Pancreas (tissue), 10 donors: ENCODE measurements at regions of chr10 and their contacts with region 1.

Region 1: DNA sequence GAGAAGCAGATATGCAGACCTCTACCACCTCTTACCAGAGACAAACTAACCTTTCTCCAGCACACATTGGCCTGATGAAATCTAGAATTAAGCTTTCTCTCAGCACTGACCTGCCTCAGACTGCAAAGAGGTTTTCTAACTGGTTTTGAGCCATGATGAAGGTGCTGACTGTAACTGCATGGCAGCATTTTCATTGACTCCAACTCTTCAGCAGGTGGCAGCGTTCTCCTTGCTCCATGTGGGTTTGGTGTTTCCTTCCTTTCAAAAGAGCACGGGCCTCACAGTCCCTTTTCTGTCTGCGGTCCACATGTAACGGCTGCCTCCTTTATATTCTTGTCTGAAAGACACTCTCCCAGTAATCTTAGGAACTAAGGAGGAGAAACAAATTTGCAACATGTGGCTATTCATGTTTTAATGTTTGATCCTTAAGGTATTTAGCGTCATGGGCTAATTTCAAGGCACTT is 12.6 kb downstream of the KLLN start:
- DNase-seq: peak in 5 of 6 donors; percentile 36 to 75 (median 57)
- ATAC-seq: peak; percentile 95 to 100 (median 100)
- H3K4me3 ChIP-seq: no peak overlapping the region
- H3K27ac ChIP-seq: peak overlapping the region in 1 of 4 donors; percentile 24
- H3K4me1 ChIP-seq: peaks cover 0 to 3% (median 0%) of the 10 kb centered on the region in 3 donors
- H3K27me3 ChIP-seq: no peaks in the 10 kb centered on the region
- CTCF ChIP-seq: peak; percentile 26 to 52 (median 48)

Region 2: DNA sequence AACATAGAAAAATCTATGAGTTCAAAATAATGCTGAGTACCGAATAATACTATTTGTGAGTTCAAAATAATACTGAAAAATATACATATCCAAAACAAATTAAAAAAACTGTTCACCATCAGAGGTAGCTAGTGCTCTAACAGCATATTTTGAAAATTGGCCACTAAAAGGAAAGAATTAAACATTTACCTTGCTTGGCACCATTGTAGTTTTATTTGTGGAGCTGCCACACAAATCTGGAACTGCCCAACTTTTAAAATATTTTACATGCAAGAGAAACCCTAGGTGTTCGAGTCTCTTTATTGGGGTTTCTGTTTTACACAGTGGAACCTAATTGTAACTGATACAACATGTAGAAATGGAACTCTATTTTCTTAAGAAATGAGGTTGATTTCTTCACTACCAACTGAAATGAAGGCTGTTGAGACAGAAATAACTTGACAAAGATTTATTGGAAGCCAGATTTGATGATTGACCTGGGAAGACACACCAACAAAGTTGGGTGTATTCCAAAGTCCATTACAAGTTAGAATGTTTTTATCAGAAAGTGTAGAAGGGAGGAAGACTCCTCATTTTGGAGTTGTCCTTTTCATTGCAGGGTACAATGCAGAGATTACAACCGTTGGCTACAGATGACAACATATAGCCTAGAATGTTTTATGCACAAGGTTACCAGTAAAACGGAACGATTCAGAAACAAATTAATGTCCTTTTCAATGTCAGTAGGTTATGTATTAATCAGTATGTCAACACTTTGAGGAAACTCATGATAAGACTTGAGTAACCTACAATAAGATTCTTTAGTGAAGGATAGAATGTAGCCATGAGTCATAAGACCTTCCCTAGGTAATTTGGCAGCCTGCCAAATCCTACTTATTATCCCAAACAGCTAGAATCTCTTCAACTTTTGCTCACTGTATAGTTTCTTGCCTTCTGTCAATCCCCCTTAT is 264.9 kb before region 1 on chr10:
- intact Hi-C with region 1: no loop called
- DNase-seq: peak in 2 of 6 donors; percentile 43 to 52
- ATAC-seq: peak; percentile 91 to 93 (median 92)
- H3K4me3 ChIP-seq: peak overlapping the region in 1 of 4 donors; percentile 15
- H3K27ac ChIP-seq: peak overlapping the region in 2 of 4 donors; percentile 75 to 78
- H3K4me1 ChIP-seq: peaks cover 3 to 32% (median 18%) of the 10 kb centered on the region in 3 donors
- H3K27me3 ChIP-seq: no peaks in the 10 kb centered on the region
- CTCF ChIP-seq: no peak

Region 3: DNA sequence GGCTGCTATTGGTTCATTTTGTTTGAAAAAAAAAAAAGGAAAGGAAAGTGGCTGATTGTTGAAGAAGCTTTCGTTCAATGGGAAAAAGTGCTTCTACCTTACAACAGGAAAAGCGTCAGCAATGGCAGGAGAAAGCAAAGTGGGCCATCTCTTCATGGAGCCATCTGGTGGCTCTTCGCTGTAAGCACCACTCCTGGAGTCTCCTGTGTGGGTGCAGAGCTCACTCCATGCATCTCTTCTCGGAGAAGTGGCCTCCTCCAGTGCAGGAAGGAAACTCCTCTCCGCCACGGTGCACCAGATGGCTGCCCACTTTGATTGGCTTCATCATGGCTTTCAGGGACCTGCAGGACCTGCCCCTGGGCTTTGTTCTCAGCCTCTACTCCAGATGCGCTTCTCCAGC is 263.6 kb after region 1 on chr10:
- intact Hi-C with region 1: loop called in 1 of 3 experiments (anchors 5 kb)
- DNase-seq: peak in 4 of 6 donors; percentile 40 to 74 (median 50)
- ATAC-seq: peak; percentile 91 to 97 (median 94)
- H3K4me3 ChIP-seq: no peak overlapping the region
- H3K27ac ChIP-seq: no peak overlapping the region
- H3K4me1 ChIP-seq: peaks cover 0 to 5% (median 0%) of the 10 kb centered on the region in 3 donors
- H3K27me3 ChIP-seq: no peaks in the 10 kb centered on the region
- CTCF ChIP-seq: peak; percentile 26 to 59 (median 48)

Region 4: GRCh38 chr10:88392222-88392621 is 541.4 kb after region 1 on chr10:
- intact Hi-C with region 1: loop called in 1 of 3 experiments (anchors 10 kb)
- DNase-seq: no peak
- ATAC-seq: peak in 2 of 4 donors; percentile 32 to 48
- H3K4me3 ChIP-seq: no peak overlapping the region
- H3K27ac ChIP-seq: no peak overlapping the region
- H3K4me1 ChIP-seq: peaks cover 0 to 5% (median 0%) of the 10 kb centered on the region in 3 donors
- H3K27me3 ChIP-seq: no peaks in the 10 kb centered on the region
- CTCF ChIP-seq: no peak

Region 5: GRCh38 chr10:88553116-88553752 is 702.5 kb after region 1 on chr10:
- intact Hi-C with region 1: loop called in 1 of 3 experiments (anchors 10 kb)
- DNase-seq: peak in 2 of 6 donors; percentile 21 to 51
- ATAC-seq: peak; percentile 81 to 99 (median 98)
- H3K4me3 ChIP-seq: no peak overlapping the region
- H3K27ac ChIP-seq: no peak overlapping the region
- H3K4me1 ChIP-seq: no peaks in the 10 kb centered on the region
- H3K27me3 ChIP-seq: no peaks in the 10 kb centered on the region
- CTCF ChIP-seq: peak in 3 of 4 donors; percentile 36 to 65 (median 59)